Prostate gland (tissue), 2 donors: ENCODE measurements at regions of chr20 and their contacts with region 1.

Region 1: DNA sequence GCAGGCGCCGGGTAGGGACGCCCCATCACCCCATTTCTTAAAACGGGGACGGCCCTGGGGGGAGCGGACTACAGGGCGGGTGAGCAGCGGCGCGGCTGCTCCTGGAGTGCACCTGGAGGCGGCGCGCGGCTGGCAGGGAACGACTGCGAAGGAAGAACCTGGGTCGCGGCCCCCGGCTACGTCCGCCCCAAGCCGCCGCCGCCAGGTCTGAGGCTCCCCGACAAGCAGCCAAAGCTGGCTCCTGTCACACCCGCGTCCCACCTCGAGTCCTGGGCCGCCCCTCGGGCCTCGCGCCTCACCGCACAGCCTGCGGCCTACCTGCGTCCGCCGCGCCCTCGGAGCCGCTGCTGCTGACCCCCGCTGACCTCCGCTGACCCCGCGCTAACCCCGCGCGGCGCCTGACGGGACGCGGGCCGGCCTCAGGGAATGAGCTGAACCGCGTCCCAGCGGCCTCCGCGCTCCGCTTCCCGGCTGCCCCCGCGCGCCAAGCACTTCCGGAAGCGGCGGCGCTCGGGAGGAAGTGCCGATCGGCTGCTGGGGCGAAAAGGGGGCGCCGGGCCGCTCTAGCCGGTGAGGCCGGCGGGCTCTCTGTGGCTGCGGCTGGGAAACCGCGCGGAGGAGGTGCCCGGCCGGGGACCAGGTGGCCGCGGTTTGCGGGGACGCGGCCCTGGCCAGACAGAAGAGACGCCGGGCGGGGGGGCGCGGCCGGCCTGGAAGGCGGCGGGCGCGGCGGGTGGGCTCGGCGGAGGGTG is at the starts of genes ARFRP1 and ZGPAT:
- DNase-seq: peak; percentile 73
- H3K4me3 ChIP-seq: peak within 1 kb of the TSS; percentile 84 to 91
- H3K27ac ChIP-seq: peak within 1 kb of the TSS; percentile 70 to 73
- H3K4me1 ChIP-seq: peaks cover 17% of the 10 kb centered on the region
- H3K27me3 ChIP-seq: no peaks in the 10 kb centered on the region
- CTCF ChIP-seq: peak in 1 of 4 experiments; percentile 24
- POLR2A ChIP-seq: peak; percentile 56
- total RNA-seq, gene ARFRP1: 36.8 to 50.8 TPM
- total RNA-seq, gene ZGPAT: 29.3 to 55.5 TPM

Region 2: GRCh38 chr20:63657937-63658748 is 49.6 kb before region 1 on chr20 and contains the start of gene RTEL1:
- intact Hi-C with region 1: loop called (anchors 5 kb)
- DNase-seq: peak; percentile 88
- H3K4me3 ChIP-seq: peak within 1 kb of the TSS; percentile 69 to 79
- H3K27ac ChIP-seq: peak within 1 kb of the TSS; percentile 86 to 87
- H3K4me1 ChIP-seq: peaks cover 9% of the 10 kb centered on the region
- H3K27me3 ChIP-seq: no peaks in the 10 kb centered on the region
- CTCF ChIP-seq: peak in 2 of 4 experiments; percentile 20 to 36
- POLR2A ChIP-seq: no peak
- total RNA-seq, gene RTEL1: 21.8 to 42.6 TPM

Region 3: GRCh38 chr20:63791497-63792156 is 83.9 kb after region 1 on chr20:
- intact Hi-C with region 1: no loop called
- DNase-seq: no peak
- H3K4me3 ChIP-seq: no peak overlapping the region
- H3K27ac ChIP-seq: no peak overlapping the region
- H3K4me1 ChIP-seq: no peaks in the 10 kb centered on the region
- H3K27me3 ChIP-seq: no peaks in the 10 kb centered on the region
- CTCF ChIP-seq: no peak
- POLR2A ChIP-seq: no peak